Gastrocnemius medialis (tissue), 4 donors: ENCODE measurements at regions of chr15 and their contacts with region 1.

Region 1: GRCh38 chr15:52568601-52569256 is at the start of gene ARPP19:
- DNase-seq: peak; percentile 93 to 96
- ATAC-seq: peak; percentile 85 to 87
- H3K4me3 ChIP-seq: peak within 1 kb of the TSS; percentile 58 to 87 (median 75)
- H3K27ac ChIP-seq: peak within 1 kb of the TSS; percentile 86 to 97 (median 92)
- H3K4me1 ChIP-seq: peaks cover 25 to 29% of the 10 kb centered on the region in 2 donors
- H3K27me3 ChIP-seq: no peaks in the 10 kb centered on the region
- CTCF ChIP-seq: peak in 3 of 5 experiments; percentile 11 to 35 (median 17)
- POLR2A ChIP-seq: peak; percentile 93 to 97
- total RNA-seq, gene ARPP19: 153 to 428 (median 207) TPM

Region 2: GRCh38 chr15:52276256-52276770 is 292.4 kb before region 1 on chr15:
- in situ Hi-C with region 1: no loop called
- intact Hi-C with region 1: no loop called
- DNase-seq: no peak
- ATAC-seq: no peak
- H3K4me3 ChIP-seq: no peak overlapping the region
- H3K27ac ChIP-seq: no peak overlapping the region
- H3K4me1 ChIP-seq: no peaks in the 10 kb centered on the region
- H3K27me3 ChIP-seq: no peaks in the 10 kb centered on the region
- CTCF ChIP-seq: no peak
- POLR2A ChIP-seq: no peak

Region 3: GRCh38 chr15:52641351-52641750 is 72.6 kb after region 1 on chr15:
- in situ Hi-C with region 1: no loop called
- intact Hi-C with region 1: no loop called
- DNase-seq: no peak
- ATAC-seq: no peak
- H3K4me3 ChIP-seq: no peak overlapping the region
- H3K27ac ChIP-seq: peak overlapping the region in 3 of 4 donors; percentile 2 to 89 (median 82)
- H3K4me1 ChIP-seq: peaks cover 29 to 48% of the 10 kb centered on the region in 2 donors
- H3K27me3 ChIP-seq: no peaks in the 10 kb centered on the region
- CTCF ChIP-seq: no peak
- POLR2A ChIP-seq: no peak

Region 4: DNA sequence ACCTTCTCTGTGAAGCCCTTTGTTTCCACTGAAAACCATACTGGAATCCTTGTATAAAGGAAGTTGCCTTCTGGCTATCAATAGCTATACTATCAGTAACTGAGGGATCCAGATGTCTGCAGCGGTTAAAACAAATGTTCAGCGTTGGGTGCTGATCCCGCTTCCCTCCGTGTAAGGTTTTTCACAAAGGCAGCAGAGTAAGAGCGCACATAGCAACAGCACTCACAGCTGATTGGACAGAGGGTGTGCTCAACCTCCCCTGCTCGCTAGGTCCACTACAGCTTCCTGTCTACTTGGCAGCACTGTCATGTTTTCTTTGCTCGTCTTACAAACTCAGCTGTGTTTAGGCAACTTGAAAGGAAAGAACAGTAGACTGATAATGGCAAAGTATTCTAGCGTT is 83.1 kb after region 1 on chr15:
- in situ Hi-C with region 1: loop called in 1 of 4 experiments (anchors 25 kb)
- intact Hi-C with region 1: no loop called
- DNase-seq: peak; percentile 69
- ATAC-seq: peak; percentile 68 to 86
- H3K4me3 ChIP-seq: peak overlapping the region; percentile 6 to 34 (median 23)
- H3K27ac ChIP-seq: peak overlapping the region; percentile 79 to 89 (median 83)
- H3K4me1 ChIP-seq: peaks cover 85 to 98% of the 10 kb centered on the region in 2 donors
- H3K27me3 ChIP-seq: no peaks in the 10 kb centered on the region
- CTCF ChIP-seq: no peak
- POLR2A ChIP-seq: no peak

Region 5: DNA sequence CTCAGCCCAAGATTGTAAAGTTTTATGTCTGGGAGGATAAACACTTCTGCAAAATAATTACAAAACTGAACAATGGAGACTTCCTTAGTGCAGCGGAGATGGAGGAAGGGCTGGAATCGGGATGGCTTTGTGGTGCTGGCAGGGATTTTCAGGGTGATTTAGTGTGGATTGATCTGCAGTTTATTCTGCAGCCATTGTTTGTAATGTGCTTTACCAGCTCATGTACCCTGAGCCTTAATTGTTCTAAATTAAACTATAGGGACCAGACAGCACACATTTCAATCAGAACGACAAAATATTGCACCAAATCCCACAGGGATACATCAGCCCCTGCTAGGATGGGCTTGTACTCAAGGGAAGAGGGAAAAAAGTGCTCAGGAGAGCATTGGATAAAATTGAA is 324.6 kb after region 1 on chr15:
- in situ Hi-C with region 1: no loop called
- intact Hi-C with region 1: no loop called
- DNase-seq: no peak
- ATAC-seq: no peak
- H3K4me3 ChIP-seq: no peak overlapping the region
- H3K27ac ChIP-seq: no peak overlapping the region
- H3K4me1 ChIP-seq: no peaks in the 10 kb centered on the region
- H3K27me3 ChIP-seq: no peaks in the 10 kb centered on the region
- CTCF ChIP-seq: no peak
- POLR2A ChIP-seq: no peak